ENCODE measurements at regions of chr4 and their contacts with region 1.

Region 1: DNA sequence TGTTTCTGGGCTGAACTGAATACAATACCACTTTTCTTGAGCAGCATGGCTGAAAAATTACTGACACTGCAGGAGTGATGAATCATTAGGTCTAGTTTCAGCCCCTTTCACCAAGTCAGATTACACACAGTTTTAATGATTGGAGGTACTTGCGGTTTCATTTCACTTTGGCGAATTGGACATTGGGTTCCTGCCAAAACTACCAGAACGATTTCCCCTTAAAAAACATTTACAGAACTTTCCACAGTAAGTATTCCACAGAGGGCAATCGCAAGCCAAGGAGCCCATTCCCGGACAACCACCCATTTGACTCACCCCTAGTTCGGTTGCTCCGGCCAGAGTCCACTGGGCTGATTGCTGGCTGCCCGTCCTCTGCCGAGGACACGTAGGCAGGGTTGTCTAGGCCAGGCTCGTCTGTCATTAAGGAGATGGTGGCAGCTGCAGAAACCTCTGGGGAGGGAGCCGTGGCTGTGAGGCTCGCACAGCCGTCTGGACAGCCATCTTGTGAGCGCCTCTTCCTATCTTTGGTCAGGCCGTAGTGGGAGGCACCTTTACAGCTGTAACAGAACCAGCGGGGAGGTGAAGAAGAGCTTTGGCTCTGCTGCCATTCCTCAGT is 83.5 kb downstream of the LNX1 start:
- DNase-seq: no peak
- ATAC-seq: no peak
- H3K4me3 ChIP-seq: no peak overlapping the region
- H3K27ac ChIP-seq: no peak overlapping the region
- H3K4me1 ChIP-seq: no peaks in the 10 kb centered on the region
- H3K27me3 ChIP-seq: no peaks in the 10 kb centered on the region; the same call in 1 of the 2 replicates
- CTCF ChIP-seq: no peak
- POLR2A ChIP-seq: no peak
- RAD21 ChIP-seq: no peak

Region 2: DNA sequence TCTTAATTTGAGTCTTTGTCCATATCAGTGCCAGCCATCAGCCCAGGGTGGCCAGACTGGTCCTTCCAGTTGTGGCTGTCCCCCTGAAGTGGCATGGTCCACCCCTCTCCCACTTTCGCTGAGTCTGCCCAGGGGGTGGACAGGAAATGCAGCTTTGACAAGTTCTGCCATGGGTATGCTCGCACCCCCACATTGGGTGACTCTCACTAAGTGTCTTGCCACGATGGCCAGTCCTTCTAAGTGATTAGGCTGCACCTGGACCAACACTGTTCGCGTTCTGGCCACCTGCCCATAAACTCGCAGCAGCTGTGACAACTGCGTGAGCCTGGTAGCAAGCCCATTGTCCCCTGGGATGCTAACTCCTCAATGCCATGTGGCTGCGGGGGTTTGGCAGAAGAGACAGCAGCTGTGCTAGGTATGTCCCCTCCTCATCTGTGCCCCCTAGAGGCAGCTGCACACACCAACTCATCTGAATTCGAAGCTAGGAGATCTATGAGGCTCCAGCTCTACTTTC is 93.5 kb after region 1 on chr4:
- CTCF ChIA-PET with region 1: interaction called, 12 read pairs
- POLR2A ChIA-PET with region 1: no interaction called
- RAD21 ChIA-PET with region 1: no interaction called
- intact Hi-C with region 1: no loop called
- DNase-seq: no peak
- ATAC-seq: peak; percentile 96
- H3K4me3 ChIP-seq: no peak overlapping the region
- H3K27ac ChIP-seq: no peak overlapping the region; the same call in 1 of the 2 replicates
- H3K4me1 ChIP-seq: peaks cover 0 to 5% of the 10 kb centered on the region in 2 experiments; a peak in 1 of 4 replicates
- H3K27me3 ChIP-seq: no peaks in the 10 kb centered on the region
- CTCF ChIP-seq: peak in 2 of 3 experiments; percentile 66 to 73; a peak in 4 of 6 replicates
- POLR2A ChIP-seq: no peak
- RAD21 ChIP-seq: peak; percentile 54